ENCODE measurements at regions of chr14 and their contacts with region 1.

Region 1: GRCh38 chr14:21014761-21015190 is 10.1 kb downstream of the NDRG2 start:
- DNase-seq: peak; percentile 89 to 97
- H3K4me3 ChIP-seq: no peak overlapping the region
- CTCF ChIP-seq: peak in 1 of 3 donors; percentile 70
- POLR2A ChIP-seq: no peak

Region 2: GRCh38 chr14:21092273-21093011 is 77.7 kb after region 1 on chr14:
- intact Hi-C with region 1: loop called (anchors 10 kb)
- DNase-seq: peak; percentile 72 to 96
- H3K4me3 ChIP-seq: no peak overlapping the region
- CTCF ChIP-seq: peak in 2 of 3 donors; percentile 95 to 99
- POLR2A ChIP-seq: no peak